ENCODE measurements at regions of chr1 and their contacts with region 1.

Region 1: DNA sequence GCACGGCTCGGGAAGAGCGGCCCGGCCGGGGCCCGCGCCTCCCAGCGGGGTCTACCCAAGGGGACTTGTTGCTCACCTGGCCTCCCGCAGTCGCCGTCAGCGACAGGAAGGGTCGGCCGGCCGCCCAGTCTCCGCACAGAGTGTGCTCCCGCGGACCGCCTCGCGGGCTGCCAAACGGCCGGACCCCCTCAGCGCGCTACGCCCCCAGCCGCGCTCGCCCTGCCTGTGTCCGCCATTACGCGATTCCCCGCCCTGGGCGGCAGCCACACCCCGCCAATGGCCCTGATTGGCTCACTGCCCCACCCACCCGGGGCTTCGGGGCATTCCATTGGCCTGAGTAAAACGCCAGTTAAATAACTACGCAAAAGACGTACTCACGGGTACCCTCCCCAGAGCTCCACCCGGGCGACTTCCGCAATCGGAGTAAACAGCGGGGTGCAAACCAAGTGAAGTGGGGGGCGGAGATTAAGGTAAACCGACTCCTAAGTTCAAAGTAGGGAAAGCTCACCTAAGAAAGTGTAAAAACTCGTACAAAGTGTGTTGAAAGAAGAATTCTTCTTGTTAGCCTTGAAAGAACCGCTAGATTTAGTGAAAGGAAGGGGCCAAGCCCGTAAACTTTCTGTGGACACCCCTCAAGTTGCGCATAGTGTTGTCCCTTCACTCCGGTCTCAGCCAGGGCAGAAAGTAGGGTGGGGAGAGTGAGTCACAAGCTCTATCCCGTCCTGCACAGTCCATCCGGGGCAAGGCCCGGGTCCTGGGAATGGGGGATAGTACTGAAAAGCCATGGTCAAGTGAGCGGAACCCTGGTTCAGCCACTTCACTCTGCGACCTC is at the start of gene WASF2:
- DNase-seq: peak; percentile 88 to 99
- H3K4me3 ChIP-seq: peak within 1 kb of the TSS; percentile 71 to 97
- H3K27ac ChIP-seq: peak within 1 kb of the TSS; percentile 92 to 99
- H3K4me1 ChIP-seq: peaks cover 20 to 26% of the 10 kb centered on the region in 2 donors
- H3K27me3 ChIP-seq: no peaks in the 10 kb centered on the region
- CTCF ChIP-seq: no peak
- total RNA-seq, gene WASF2: 70.4 TPM

Region 2: DNA sequence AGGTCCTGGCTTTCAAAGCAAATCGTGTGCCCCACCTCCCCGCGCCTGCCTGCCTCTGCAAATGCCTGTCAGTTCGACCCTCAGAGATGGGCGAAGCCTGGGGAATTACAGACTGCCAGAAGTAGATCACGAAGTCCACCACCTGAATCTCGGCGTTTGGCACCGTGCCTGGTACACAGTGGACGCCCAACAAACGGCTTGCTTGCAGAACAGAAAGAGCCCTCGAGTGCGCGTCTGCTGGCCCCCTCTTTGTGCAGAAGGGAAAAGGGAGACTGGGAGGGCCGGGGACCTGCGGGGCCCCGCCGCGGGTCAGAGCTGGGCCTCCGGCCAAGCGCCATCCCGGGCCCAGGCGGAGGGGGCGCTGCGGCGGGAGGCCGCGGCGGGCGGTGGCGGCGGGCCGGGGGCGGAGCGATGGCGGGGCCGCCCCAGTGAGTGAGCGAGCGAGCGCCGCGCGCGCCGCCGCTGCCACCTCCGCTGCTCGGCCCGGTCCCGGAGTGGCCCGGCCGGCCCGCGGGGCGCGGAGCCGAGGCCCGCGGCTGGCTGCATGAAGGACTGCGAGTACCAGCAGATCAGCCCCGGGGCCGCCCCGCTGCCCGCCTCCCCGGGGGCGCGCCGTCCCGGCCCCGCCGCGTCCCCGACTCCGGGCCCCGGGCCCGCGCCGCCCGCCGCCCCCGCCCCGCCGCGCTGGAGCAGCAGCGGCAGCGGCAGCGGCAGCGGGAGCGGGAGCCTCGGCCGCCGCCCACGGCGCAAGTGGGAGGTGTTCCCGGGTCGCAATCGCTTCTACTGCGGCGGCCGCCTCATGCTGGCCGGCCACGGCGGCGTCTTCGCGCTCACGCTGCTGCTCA is 663.6 kb before region 1 on chr1 and contains the start of gene ZDHHC18:
- intact Hi-C with region 1: no loop called
- DNase-seq: peak in 1 of 2 donors; percentile 76
- H3K4me3 ChIP-seq: peak within 1 kb of the TSS; percentile 52 to 92
- H3K27ac ChIP-seq: peak within 1 kb of the TSS; percentile 75 to 76
- H3K4me1 ChIP-seq: peaks cover 3 to 14% of the 10 kb centered on the region in 2 donors
- H3K27me3 ChIP-seq: no peaks in the 10 kb centered on the region
- CTCF ChIP-seq: peak; percentile 26 to 67 (median 40)
- total RNA-seq, gene ZDHHC18: 36.0 TPM

Region 3: DNA sequence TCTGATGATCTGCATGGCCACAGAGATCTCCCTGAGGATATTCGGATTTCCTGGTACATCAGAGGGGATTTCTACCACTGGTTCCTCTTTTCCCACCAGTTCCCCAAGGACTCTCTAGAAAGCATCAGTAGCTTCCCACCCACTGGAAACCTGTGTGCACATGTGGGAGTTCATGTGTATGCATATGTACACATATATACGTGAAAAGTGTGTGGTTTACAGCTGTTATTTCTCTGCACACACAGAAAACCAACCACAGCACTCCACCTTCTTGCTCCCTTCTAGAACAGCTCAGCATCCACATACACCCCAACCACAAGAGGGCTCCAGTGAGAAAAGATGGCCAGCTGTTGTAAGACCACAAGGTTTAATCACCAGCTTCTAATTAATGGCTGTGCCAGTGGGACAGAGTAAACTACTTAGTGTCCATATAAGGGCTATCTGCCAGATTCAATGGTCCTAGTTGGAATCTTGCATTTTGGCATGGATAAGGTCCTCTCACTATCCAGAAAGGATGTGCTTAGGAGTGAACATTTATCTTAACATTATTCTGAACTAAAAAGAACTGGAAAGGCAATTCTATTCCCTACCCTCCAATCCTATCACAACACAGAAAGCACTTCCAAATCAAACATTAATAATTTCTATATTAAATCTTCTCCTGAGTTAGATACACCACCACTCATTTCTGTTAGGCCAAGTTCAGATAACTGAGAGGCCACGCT is 73.6 kb before region 1 on chr1:
- intact Hi-C with region 1: loop called (anchors 5 kb)
- DNase-seq: no peak
- H3K4me3 ChIP-seq: no peak overlapping the region
- H3K27ac ChIP-seq: no peak overlapping the region
- H3K4me1 ChIP-seq: peaks cover 4 to 33% of the 10 kb centered on the region in 2 donors
- H3K27me3 ChIP-seq: no peaks in the 10 kb centered on the region
- CTCF ChIP-seq: peak in 2 of 3 experiments; percentile 33 to 51

Region 4: GRCh38 chr1:27542408-27543273 is 52.5 kb after region 1 on chr1:
- intact Hi-C with region 1: loop called (anchors 5 kb)
- DNase-seq: no peak
- H3K4me3 ChIP-seq: no peak overlapping the region
- H3K27ac ChIP-seq: peak overlapping the region; percentile 79 to 91
- H3K4me1 ChIP-seq: peaks cover 41 to 66% of the 10 kb centered on the region in 2 donors
- H3K27me3 ChIP-seq: no peaks in the 10 kb centered on the region
- CTCF ChIP-seq: no peak

Region 5: DNA sequence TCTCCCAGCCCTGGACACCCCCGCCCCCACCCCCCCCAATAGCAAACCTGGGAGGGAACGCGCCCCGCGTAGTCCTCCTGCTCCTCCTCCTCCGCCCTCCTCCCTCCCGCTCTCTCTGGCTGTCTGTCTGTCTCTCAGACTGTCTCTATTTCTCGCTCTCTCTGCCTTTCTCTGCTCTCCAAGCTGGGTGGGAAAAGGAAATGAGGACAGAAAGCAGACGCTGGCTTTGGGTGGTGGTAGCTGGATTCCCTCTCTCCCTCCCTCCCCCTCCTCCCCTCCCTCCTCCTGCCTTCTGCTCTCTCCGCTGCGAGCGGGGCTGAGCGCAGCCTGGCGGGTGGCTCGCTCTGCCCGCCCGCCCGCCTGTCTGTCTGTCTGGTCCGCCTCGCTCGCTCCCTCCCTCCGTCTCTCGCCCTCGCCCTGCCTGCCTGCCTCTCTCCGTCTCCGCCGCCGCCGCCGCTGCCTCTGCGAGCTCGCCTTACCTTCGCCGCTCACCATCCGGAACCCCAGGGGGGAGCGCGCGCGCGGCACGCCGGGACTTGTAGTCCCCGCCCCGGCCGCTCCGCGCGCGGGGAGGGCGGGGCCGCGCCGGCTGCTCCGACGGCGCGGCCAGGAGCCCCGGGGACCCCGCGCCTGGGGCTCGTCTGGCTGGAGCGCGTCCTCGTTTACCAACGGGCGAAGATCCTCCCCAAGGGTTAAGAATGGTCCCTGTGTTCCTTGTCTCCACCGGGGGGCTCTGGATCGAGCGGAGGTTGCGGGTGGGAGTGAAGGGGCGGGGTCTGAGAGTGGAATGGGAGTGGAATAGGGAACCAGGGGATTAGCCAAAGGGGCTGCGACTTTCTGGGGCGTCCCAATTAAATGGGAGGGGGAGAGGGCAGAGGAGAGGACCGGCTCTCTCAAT is 113.8 kb after region 1 on chr1 and contains the start of gene AHDC1:
- intact Hi-C with region 1: loop called (anchors 2 kb)
- DNase-seq: peak; percentile 74 to 95
- H3K4me3 ChIP-seq: peak within 1 kb of the TSS; percentile 74 to 91
- H3K27ac ChIP-seq: peak within 1 kb of the TSS; percentile 89 to 91
- H3K4me1 ChIP-seq: peaks cover 25 to 32% of the 10 kb centered on the region in 2 donors
- H3K27me3 ChIP-seq: no peaks in the 10 kb centered on the region
- CTCF ChIP-seq: peak in 2 of 3 experiments; percentile 32 to 38
- total RNA-seq, gene AHDC1: 205 TPM

Measured in ascending aorta (tissue), 2 donors.